ENCODE measurements at regions of chr10 and their contacts with region 1.

Region 1: DNA sequence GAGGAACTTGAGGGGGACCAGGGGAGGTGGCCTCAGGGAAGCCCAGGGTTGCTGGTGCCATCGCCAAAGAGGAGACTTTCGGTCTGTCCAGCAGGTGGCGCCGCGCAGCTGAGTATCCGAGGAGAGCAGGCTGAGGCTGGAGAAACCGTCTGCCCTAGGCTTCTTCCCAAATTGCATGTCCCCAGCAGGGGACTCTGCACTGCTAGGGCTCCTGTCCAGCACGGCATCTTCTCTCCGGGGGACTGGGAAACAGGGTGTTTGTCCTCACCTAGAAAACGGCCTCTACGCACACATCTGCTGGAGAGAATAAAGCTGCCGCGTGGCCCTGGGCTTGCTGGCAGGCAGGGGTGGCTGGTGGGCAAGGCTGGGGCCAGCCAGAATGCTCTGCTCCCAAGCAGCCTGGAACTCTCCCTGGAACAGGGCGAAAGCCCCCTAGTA is 161.9 kb downstream of the SH2D4B start:
- DNase-seq: peak; percentile 82
- H3K4me3 ChIP-seq: no peak overlapping the region
- H3K27ac ChIP-seq: no peak overlapping the region
- H3K4me1 ChIP-seq: no peaks in the 10 kb centered on the region
- H3K27me3 ChIP-seq: no peaks in the 10 kb centered on the region
- CTCF ChIP-seq: peak; percentile 78

Region 2: GRCh38 chr10:80890146-80890545 is 190.5 kb after region 1 on chr10:
- intact Hi-C with region 1: no loop called
- DNase-seq: no peak
- H3K4me3 ChIP-seq: no peak overlapping the region
- H3K27ac ChIP-seq: no peak overlapping the region
- H3K4me1 ChIP-seq: no peaks in the 10 kb centered on the region
- H3K27me3 ChIP-seq: no peaks in the 10 kb centered on the region
- CTCF ChIP-seq: no peak

Region 3: GRCh38 chr10:80924063-80924952 is 224.7 kb after region 1 on chr10:
- intact Hi-C with region 1: loop called (anchors 10 kb)
- DNase-seq: peak; percentile 63
- H3K4me3 ChIP-seq: no peak overlapping the region
- H3K27ac ChIP-seq: no peak overlapping the region
- H3K4me1 ChIP-seq: no peaks in the 10 kb centered on the region
- H3K27me3 ChIP-seq: no peaks in the 10 kb centered on the region
- CTCF ChIP-seq: peak; percentile 61